Activated CD4-positive, alpha-beta T cell treated with anti-CD3 and anti-CD28 coated beads for 36 hours (primary cell): ENCODE measurements at regions of chr1 and their contacts with region 1.

Region 1: DNA sequence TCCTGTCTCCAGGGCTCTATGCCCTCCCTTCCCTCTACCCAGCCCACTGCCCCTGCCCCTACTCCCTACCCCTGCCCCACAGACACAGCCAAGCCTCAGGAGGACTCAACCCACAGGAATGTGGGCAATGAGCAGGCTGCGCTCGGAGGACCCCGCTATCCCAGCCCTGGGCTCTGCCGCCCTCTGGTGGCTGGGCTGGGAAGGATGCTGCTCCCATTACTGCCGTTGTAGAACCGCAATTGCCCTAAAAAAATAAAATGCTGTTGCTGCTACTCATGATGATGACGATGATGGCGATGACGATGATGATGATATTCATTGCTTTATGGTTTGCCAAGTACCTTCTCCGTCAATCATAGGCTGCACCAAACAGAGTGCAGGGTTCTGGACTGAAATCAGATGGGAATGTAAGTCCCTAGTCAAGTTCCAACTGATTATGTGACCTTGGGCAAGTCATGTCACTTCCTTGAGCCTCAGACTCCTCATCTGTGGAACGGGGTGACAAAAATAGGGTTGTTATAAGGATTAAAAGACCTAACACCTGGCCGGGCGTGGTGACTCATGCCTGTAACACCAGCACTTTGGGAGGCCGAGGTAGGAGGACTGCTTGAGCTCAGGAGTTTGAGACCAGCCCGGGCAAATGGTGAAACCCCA is 24.6 kb downstream of the ARHGEF19 start:
- DNase-seq: peak; percentile 86
- ATAC-seq: peak; percentile 94
- H3K4me3 Mint-ChIP-seq: no peak overlapping the region
- H3K27ac Mint-ChIP-seq: no peak overlapping the region
- H3K4me1 Mint-ChIP-seq: peaks cover 3% of the 10 kb centered on the region
- H3K27me3 Mint-ChIP-seq: peaks cover 6% of the 10 kb centered on the region

Region 2: GRCh38 chr1:15803354-15803753 is 384.5 kb before region 1 on chr1:
- CTCF ChIA-PET with region 1: no interaction called
- POLR2A ChIA-PET with region 1: no interaction called
- intact Hi-C with region 1: loop called in 1 of 2 experiments (anchors 10 kb)
- DNase-seq: peak; percentile 41
- ATAC-seq: peak; percentile 42
- H3K4me3 Mint-ChIP-seq: no peak overlapping the region
- H3K27ac Mint-ChIP-seq: no peak overlapping the region
- H3K4me1 Mint-ChIP-seq: no peaks in the 10 kb centered on the region
- H3K27me3 Mint-ChIP-seq: no peaks in the 10 kb centered on the region

Region 3: GRCh38 chr1:16167331-16168143 is 20.3 kb before region 1 on chr1:
- CTCF ChIA-PET with region 1: interaction called, 10 read pairs
- POLR2A ChIA-PET with region 1: no interaction called
- intact Hi-C with region 1: no loop called
- DNase-seq: peak; percentile 79
- ATAC-seq: peak; percentile 78
- H3K4me3 Mint-ChIP-seq: peak overlapping the region; percentile 44
- H3K27ac Mint-ChIP-seq: no peak overlapping the region
- H3K4me1 Mint-ChIP-seq: peaks cover 49% of the 10 kb centered on the region
- H3K27me3 Mint-ChIP-seq: no peaks in the 10 kb centered on the region

Region 4: GRCh38 chr1:16243936-16244649 is 56.2 kb after region 1 on chr1:
- CTCF ChIA-PET with region 1: interaction called, 5 read pairs
- POLR2A ChIA-PET with region 1: no interaction called
- intact Hi-C with region 1: loop called in 1 of 2 experiments (anchors 1 kb)
- DNase-seq: peak; percentile 87
- ATAC-seq: peak; percentile 79
- H3K4me3 Mint-ChIP-seq: no peak overlapping the region
- H3K27ac Mint-ChIP-seq: no peak overlapping the region
- H3K4me1 Mint-ChIP-seq: peaks cover 10% of the 10 kb centered on the region
- H3K27me3 Mint-ChIP-seq: no peaks in the 10 kb centered on the region